ENCODE measurements at regions of chr13 and their contacts with region 1.

Region 1: DNA sequence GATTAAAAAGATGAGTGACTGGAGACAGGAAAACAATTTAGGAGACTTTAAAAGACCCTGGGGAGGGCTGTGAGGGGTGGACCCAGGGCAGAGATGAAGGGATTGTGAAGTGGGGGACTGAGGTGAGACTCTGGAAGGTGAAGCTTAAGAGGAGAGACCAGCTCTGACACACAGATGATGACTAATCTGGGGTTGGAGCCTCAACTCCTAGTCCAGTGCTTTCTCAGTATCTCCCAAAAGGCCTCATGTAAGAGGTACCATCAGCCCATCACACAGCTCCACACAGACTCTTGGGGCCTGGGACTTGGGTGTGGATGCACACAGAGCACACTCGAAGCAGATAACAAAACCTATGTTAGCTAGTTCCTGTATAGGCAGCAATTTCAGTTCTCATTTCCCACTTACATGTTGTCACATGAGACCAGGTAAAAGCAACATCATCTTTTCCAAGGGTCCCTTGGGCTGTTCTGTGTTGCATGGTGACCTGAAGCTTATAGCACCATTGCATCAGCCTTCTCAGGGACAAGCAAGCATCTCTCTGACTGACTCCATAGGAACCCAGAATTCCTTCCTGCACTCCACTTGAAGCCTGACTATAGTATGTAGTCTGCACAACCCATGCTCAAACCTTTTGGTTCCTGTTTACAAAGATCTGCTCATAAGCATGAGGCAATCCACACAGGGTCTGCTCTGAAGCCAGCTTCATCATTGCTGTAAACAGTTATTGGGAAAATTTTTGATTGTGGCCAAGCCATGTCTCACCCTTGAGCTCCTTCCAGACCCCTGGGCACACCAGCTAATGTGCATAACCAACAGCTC is 88.6 kb upstream of the MYCBP2 start:
- DNase-seq: no peak
- H3K4me3 ChIP-seq: no peak overlapping the region
- H3K27ac ChIP-seq: no peak overlapping the region
- H3K4me1 ChIP-seq: no peaks in the 10 kb centered on the region
- H3K27me3 ChIP-seq: no peaks in the 10 kb centered on the region
- CTCF ChIP-seq: no peak

Region 2: GRCh38 chr13:77048681-77049080 is 366.8 kb before region 1 on chr13:
- intact Hi-C with region 1: no loop called
- DNase-seq: no peak
- H3K4me3 ChIP-seq: no peak overlapping the region
- H3K27ac ChIP-seq: no peak overlapping the region
- H3K4me1 ChIP-seq: no peaks in the 10 kb centered on the region
- H3K27me3 ChIP-seq: no peaks in the 10 kb centered on the region
- CTCF ChIP-seq: no peak

Region 3: GRCh38 chr13:77345150-77345780 is 70.2 kb before region 1 on chr13:
- intact Hi-C with region 1: loop called (anchors 10 kb)
- DNase-seq: no peak
- H3K4me3 ChIP-seq: no peak overlapping the region
- H3K27ac ChIP-seq: no peak overlapping the region
- H3K4me1 ChIP-seq: no peaks in the 10 kb centered on the region
- H3K27me3 ChIP-seq: no peaks in the 10 kb centered on the region
- CTCF ChIP-seq: no peak